Activated CD8-positive, alpha-beta T cell treated with anti-CD3 and anti-CD28 coated beads for 36 hours (primary cell): ENCODE measurements at regions of chr5 and their contacts with region 1.

Region 1: DNA sequence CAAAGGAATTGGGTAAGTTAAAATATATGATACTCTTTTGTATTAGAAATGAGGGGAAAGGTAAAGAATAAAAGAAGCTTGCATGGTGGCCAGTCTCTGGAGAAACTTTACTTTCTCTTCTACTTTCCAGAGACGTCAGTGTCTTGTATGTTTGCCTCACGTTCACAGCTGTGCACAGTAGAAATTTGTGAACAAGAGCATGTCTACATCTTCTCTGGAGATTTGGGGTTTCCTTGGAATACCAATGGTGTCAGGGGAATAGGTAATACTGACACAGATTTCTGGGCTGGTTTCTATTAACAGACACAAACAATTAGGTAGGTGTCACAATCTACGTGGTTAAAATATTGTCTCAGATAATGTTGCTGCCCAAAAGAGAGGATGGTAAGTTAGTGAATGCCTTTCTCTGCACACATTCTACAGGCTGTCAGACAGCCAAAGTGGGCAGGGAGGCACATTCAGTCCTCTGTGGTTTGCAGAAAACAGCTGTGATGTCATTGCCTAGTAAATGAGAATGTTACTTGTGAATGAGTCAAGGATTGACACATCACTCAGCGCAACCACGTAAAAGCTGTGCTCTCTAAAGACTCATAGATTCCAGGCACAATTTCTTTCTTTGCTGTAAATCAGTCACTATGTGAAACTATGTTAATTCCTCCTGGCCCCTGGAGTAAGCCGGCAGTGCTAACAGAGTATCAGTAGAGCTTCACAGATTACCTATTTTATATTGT is 397.1 kb downstream of the MAN2A1 start:
- DNase-seq: peak; percentile 84
- ATAC-seq: peak; percentile 89
- H3K4me3 Mint-ChIP-seq: peak overlapping the region; percentile 42
- H3K27ac Mint-ChIP-seq: peak overlapping the region; percentile 89
- H3K4me1 Mint-ChIP-seq: peaks cover 38% of the 10 kb centered on the region
- H3K27me3 Mint-ChIP-seq: no peaks in the 10 kb centered on the region
- CTCF ChIP-seq: no peak

Region 2: DNA sequence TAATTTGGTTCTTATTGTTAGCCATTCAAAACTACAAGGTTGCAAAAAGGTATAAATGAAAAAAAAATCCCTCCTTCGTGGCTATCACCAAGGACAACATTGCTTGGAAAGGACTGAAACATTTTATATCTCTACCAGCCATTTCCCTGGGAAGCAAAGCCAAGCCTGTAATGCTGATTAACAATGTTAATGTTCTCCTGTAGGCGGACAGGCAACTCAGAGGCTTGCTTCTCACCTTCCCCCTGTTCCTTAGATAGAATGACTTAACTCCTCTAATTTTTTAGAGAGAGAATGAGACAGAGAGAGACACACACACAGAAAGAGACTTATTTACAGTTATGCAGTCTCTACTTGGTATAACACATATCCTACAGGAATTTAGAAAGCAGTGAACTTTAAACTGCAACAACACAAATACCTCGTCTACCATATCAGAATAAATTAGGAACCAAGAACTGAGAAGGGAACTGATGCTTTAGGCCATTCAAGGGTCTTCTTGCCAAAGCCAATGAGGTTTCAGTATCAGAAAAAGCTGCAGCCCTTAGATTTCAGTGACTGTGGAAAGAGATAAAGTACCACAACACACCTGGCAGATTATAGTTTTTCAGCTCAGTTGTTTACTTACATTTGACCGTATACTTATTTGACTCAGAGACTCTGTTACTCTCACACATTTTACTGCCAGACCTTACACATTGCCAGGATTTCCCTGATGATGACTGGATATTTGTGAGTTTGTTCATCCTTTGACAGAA is 418.0 kb before region 1 on chr5:
- CTCF ChIA-PET with region 1: no interaction called
- POLR2A ChIA-PET with region 1: no interaction called
- intact Hi-C with region 1: no loop called
- DNase-seq: no peak
- ATAC-seq: no peak
- H3K4me3 Mint-ChIP-seq: no peak overlapping the region
- H3K27ac Mint-ChIP-seq: no peak overlapping the region
- H3K4me1 Mint-ChIP-seq: no peaks in the 10 kb centered on the region
- H3K27me3 Mint-ChIP-seq: peaks cover 1% of the 10 kb centered on the region
- CTCF ChIP-seq: no peak

Region 3: DNA sequence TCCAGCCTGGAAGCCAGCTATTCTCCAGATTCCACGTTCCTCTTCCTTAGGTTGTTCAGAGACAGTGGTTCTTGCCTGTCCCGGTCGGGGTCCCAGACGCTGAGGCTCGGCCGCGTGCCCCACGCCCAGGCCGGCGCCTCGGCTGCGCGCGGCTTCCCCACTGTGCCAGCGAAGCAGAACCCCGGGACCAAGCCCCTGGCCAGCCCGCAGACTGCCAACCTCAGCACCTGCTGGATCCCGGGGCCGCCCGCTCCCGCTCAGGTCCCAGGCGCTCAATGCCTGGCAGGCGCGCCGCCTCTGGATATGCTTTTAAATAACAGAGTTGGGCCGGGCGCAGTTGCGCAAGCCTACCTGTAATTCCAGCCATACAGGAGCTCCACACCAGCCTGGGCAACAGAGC is 201.6 kb before region 1 on chr5:
- CTCF ChIA-PET with region 1: no interaction called
- POLR2A ChIA-PET with region 1: no interaction called
- intact Hi-C with region 1: no loop called
- DNase-seq: no peak
- ATAC-seq: no peak
- H3K4me3 Mint-ChIP-seq: no peak overlapping the region
- H3K27ac Mint-ChIP-seq: no peak overlapping the region
- H3K4me1 Mint-ChIP-seq: peaks cover 27% of the 10 kb centered on the region
- H3K27me3 Mint-ChIP-seq: no peaks in the 10 kb centered on the region
- CTCF ChIP-seq: no peak

Region 4: DNA sequence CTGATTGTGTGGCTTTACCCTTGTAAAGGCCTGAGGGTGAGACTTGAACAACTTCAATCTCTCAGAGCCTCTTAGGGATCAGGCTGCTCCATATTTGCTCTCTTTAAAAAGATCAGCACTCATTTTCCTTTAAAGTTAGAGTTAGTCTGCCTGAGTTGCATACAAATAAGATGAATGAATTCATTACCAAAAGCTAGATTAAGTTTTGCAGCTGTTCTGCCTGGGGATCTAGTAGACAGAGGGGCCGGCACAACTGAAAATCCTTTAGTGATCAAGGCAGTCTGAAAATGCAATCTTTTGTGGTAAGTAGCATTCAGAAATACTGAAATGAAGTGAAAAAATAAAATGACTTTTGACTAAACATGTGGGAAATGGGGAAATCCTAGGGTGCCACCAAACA is 133.1 kb before region 1 on chr5:
- CTCF ChIA-PET with region 1: no interaction called
- POLR2A ChIA-PET with region 1: no interaction called
- intact Hi-C with region 1: no loop called
- DNase-seq: no peak
- ATAC-seq: no peak
- H3K4me3 Mint-ChIP-seq: no peak overlapping the region
- H3K27ac Mint-ChIP-seq: no peak overlapping the region
- H3K4me1 Mint-ChIP-seq: peaks cover 5% of the 10 kb centered on the region
- H3K27me3 Mint-ChIP-seq: no peaks in the 10 kb centered on the region
- CTCF ChIP-seq: no peak

Region 5: DNA sequence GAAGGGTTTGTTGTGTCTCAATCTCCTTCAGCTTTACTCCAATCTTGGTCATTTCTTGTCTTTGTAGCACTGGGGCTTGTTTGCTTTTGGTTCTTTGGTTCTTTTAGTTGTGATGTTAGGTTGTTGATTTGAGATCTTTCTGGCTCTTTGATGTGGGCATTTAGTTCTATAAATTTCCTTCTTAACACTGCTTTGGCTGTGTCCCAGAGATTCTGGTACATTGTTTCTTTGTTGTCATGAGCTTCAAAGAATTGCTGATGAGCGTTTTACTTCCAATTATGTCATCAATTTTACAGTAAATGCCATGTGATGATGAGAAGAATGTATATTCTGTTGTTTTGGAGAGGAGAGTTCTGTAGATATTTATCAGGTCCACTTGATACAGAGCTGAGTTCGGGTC is 43.8 kb before region 1 on chr5:
- CTCF ChIA-PET with region 1: no interaction called
- POLR2A ChIA-PET with region 1: no interaction called
- intact Hi-C with region 1: no loop called
- DNase-seq: no peak
- ATAC-seq: no peak
- H3K4me3 Mint-ChIP-seq: no peak overlapping the region
- H3K27ac Mint-ChIP-seq: no peak overlapping the region
- H3K4me1 Mint-ChIP-seq: peaks cover 5% of the 10 kb centered on the region
- H3K27me3 Mint-ChIP-seq: no peaks in the 10 kb centered on the region
- CTCF ChIP-seq: no peak

Region 6: DNA sequence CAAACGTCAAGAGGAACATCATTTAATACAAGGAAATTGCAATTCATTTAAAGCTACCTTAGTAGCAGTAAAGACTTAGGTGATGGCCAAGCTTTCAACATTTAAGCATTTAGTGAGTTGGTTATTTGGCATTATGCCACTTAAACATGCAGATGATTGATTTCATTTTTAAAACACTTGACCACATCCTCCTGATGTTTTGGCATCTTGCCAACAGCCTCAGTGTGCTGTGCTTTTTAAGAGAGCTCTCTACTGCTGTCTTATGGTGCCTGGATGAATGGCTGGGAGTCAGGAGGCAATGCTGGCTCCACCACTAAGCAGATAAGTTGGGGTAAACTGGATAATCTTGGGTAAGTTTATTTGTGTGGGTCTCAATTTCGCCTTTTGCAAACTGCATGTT is 32.6 kb before region 1 on chr5:
- CTCF ChIA-PET with region 1: no interaction called
- POLR2A ChIA-PET with region 1: no interaction called
- intact Hi-C with region 1: loop called (anchors 5 kb)
- DNase-seq: peak; percentile 89
- ATAC-seq: peak; percentile 92
- H3K4me3 Mint-ChIP-seq: no peak overlapping the region
- H3K27ac Mint-ChIP-seq: peak overlapping the region; percentile 66
- H3K4me1 Mint-ChIP-seq: peaks cover 42% of the 10 kb centered on the region
- H3K27me3 Mint-ChIP-seq: no peaks in the 10 kb centered on the region
- CTCF ChIP-seq: peak; percentile 64